OCI-LY7 (cell line): ENCODE measurements at regions of chrX and their contacts with region 1.

Region 1: DNA sequence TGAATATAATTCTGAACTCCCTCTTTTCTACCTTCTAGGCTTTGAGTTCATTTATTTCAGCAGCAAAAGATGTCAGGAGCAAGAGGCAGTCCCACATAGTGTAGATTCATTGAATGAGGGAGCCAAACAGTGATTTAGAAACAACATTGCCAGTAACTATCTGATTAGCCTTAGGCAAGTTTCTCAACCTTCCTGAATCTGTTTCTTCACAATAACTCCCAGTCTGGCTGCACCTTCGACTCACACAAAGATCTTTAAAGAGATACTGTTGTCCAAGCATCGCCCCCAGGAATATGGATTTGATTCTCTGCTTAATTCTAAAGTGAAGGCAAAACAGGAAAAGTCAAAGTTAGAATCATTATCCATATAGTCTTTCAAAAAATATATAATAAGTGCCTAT is 1026.2 kb downstream of the DMD start:
- DNase-seq: no peak
- H3K4me3 ChIP-seq: no peak overlapping the region
- H3K27ac ChIP-seq: no peak overlapping the region
- H3K4me1 ChIP-seq: no peaks in the 10 kb centered on the region
- CTCF ChIP-seq: no peak

Region 2: DNA sequence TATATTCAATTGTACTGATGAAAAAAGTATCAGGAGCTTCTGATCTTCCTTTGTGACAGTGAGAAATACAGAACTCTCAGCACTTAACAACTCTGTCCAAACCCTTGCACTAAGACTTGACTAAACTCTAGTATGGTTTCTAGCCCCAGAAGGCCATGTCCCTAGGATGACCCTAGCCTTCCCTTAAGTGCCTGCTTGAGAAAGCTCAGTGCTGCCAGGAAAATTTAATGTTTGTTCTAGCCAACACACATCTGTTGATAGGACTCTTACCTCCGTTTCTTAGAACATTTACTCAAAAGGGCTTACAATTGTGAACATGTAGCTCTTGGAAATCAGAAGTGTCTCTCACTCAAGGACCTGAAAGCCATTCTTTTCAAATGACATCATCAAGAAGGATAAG is 58.2 kb before region 1 on chrX:
- CTCF ChIA-PET with region 1: no interaction called
- POLR2A ChIA-PET with region 1: interaction called, 3 read pairs
- intact Hi-C with region 1: loop called (anchors 10 kb)
- DNase-seq: no peak
- H3K4me3 ChIP-seq: no peak overlapping the region
- H3K27ac ChIP-seq: no peak overlapping the region
- H3K4me1 ChIP-seq: no peaks in the 10 kb centered on the region
- CTCF ChIP-seq: no peak